B cell (primary cell): ENCODE measurements at regions of chr1 and their contacts with region 1.

Region 1: GRCh38 chr1:44036409-44037139 is 5.3 kb upstream of the SLC6A9 start:
- DNase-seq: peak; percentile 77
- ATAC-seq: peak; percentile 83
- H3K4me3 ChIP-seq: no peak overlapping the region
- H3K4me3 Mint-ChIP-seq: no peak overlapping the region
- H3K27ac ChIP-seq: no peak overlapping the region
- H3K27ac Mint-ChIP-seq: no peak overlapping the region
- H3K4me1 ChIP-seq: peaks cover 0 to under 1% of the 10 kb centered on the region in 2 donors
- H3K4me1 Mint-ChIP-seq: peaks cover under 1% of the 10 kb centered on the region
- H3K27me3 ChIP-seq: no peaks in the 10 kb centered on the region
- H3K27me3 Mint-ChIP-seq: no peaks in the 10 kb centered on the region
- CTCF ChIP-seq: peak; percentile 88

Region 2: DNA sequence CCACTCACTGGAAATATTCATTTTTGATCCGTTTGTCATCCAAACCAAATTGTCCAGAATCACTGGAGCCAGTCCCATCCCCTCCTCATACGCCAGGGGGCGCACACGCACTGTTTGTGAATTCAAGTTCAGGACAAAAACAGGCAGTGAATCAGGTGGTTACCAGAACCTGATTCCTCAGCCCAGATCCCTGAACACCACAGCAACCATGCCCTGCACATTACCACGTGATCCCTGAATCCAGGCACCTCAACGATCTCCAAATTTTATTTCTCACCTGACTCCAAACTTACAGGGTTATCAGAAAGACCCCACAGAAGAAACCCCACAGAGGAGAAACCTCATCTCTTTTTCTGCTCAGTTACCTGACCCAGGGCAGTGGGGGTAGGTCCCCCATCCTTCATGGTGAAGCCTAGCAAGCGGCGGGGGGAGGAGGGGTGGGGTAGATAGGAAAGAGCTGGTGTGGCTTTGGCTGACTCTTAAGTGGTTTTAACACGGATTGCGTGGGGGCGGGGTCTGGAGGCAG is 507.3 kb before region 1 on chr1:
- CTCF ChIA-PET with region 1: interaction called, 12 read pairs
- POLR2A ChIA-PET with region 1: no interaction called
- intact Hi-C with region 1: loop called (anchors 1 kb)
- DNase-seq: peak; percentile 83
- ATAC-seq: peak; percentile 71
- H3K4me3 ChIP-seq: no peak overlapping the region
- H3K4me3 Mint-ChIP-seq: peak overlapping the region; percentile 72
- H3K27ac ChIP-seq: no peak overlapping the region
- H3K27ac Mint-ChIP-seq: no peak overlapping the region
- H3K4me1 ChIP-seq: peaks cover 13 to 18% of the 10 kb centered on the region in 2 donors
- H3K4me1 Mint-ChIP-seq: peaks cover 16% of the 10 kb centered on the region
- H3K27me3 ChIP-seq: peaks cover 0 to 33% (median 22%) of the 10 kb centered on the region in 4 experiments
- H3K27me3 Mint-ChIP-seq: peaks cover 59% of the 10 kb centered on the region
- CTCF ChIP-seq: peak; percentile 94

Region 3: DNA sequence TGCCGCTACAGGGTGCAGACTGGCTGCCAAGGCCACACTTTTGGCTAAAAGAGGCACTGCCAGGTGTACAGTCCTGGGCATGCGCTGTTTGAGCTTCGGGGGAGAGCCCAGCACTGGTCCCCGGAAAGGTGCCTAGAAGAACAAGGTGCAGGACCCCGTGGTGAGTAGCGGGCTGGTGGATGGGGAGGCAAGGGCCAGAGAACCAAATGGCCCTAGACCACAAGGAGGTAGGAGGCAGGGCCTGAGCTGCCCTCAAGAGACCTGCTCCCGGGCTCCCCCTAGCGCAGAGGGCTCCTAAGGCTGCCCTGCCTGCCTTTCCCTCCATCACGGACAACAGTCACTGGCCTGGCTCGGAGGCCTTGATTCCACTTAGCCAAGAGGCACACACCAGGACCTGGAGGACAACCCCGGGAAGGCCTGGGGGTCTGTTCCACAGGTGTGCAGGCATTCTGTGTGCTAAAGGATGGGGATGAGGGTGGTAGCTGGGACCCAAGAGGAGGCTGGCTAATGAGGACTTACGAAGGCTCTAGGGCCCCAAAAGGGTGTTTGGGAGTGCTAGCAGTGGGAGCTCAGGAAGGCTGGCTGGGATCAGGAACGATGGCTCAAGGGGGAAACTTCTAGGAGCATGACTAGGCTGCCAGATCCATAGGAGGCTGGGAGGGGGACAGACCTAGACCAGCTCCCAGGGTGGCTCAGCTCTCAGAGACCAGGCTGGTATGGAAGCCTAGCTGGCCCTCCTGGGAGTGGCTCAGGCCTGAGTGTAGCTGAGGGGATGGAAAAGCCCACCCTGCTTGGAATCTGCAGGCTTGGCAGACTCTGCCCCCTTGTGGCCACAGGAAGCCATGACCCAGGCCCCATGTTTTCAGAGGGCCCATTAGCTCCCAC is 102.2 kb before region 1 on chr1:
- CTCF ChIA-PET with region 1: interaction called, 14 read pairs
- POLR2A ChIA-PET with region 1: no interaction called
- intact Hi-C with region 1: no loop called
- DNase-seq: peak; percentile 66
- ATAC-seq: peak; percentile 59
- H3K4me3 ChIP-seq: no peak overlapping the region
- H3K4me3 Mint-ChIP-seq: peak overlapping the region; percentile 41
- H3K27ac ChIP-seq: no peak overlapping the region
- H3K27ac Mint-ChIP-seq: no peak overlapping the region
- H3K4me1 ChIP-seq: peaks cover 29 to 30% of the 10 kb centered on the region in 2 donors
- H3K4me1 Mint-ChIP-seq: peaks cover 21% of the 10 kb centered on the region
- H3K27me3 ChIP-seq: peaks cover 0 to 44% (median 26%) of the 10 kb centered on the region in 4 experiments
- H3K27me3 Mint-ChIP-seq: peaks cover 26% of the 10 kb centered on the region
- CTCF ChIP-seq: peak; percentile 69

Region 4: DNA sequence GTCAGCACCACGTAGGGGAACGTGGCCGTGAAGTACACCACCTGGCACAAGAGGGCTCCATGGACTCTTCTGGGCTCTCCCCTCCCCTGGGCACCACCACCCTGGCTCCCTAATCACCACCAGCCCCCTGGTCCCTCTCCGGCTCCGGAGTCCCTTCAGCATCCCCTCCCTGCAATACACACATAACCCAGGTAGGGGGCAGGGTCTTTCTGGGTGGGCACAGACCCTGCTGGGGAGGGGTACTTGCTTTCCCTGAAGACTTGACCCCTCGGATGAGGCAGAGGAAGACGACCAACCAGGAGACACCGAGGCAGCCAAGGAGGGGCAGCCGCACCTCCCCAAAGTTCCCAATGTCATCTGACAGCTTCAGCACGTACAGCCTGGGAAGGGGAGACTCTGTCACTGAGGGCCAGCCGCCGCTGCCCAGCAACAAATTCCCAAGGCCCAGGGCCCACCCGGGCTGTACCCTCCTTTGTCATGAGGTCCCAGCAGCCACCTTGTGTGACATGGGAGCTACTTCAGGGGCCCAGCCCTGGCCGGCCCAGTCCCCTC is 33.9 kb before region 1 on chr1:
- CTCF ChIA-PET with region 1: interaction called, 227 read pairs
- POLR2A ChIA-PET with region 1: no interaction called
- intact Hi-C with region 1: no loop called
- DNase-seq: no peak
- ATAC-seq: no peak
- H3K4me3 ChIP-seq: no peak overlapping the region
- H3K4me3 Mint-ChIP-seq: no peak overlapping the region
- H3K27ac ChIP-seq: no peak overlapping the region
- H3K27ac Mint-ChIP-seq: no peak overlapping the region
- H3K4me1 ChIP-seq: no peaks in the 10 kb centered on the region
- H3K4me1 Mint-ChIP-seq: no peaks in the 10 kb centered on the region
- H3K27me3 ChIP-seq: no peaks in the 10 kb centered on the region
- H3K27me3 Mint-ChIP-seq: no peaks in the 10 kb centered on the region
- CTCF ChIP-seq: peak; percentile 18

Region 5: DNA sequence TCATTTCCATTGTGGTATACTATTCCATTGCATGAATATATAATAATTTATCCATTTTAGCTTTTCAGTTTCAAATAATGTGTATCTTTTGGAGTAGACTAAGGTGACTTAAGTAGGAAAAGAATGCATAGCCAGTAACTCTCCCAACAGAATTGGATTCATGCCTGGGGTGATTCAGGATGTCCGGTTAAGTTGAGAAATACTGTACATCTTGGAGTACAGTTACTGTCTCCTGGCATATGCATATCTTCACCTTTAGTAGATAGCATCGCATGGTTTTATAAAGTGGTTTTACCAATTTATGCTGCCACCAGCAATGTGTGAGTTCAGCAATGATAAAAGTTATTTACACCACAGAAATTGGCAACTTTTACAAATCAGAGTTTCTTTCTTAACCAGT is 13.3 kb after region 1 on chr1:
- CTCF ChIA-PET with region 1: interaction called, 59 read pairs
- POLR2A ChIA-PET with region 1: no interaction called
- intact Hi-C with region 1: no loop called
- DNase-seq: no peak
- ATAC-seq: no peak
- H3K4me3 ChIP-seq: no peak overlapping the region
- H3K4me3 Mint-ChIP-seq: no peak overlapping the region
- H3K27ac ChIP-seq: no peak overlapping the region
- H3K27ac Mint-ChIP-seq: no peak overlapping the region
- H3K4me1 ChIP-seq: peaks cover 0 to 3% of the 10 kb centered on the region in 2 donors
- H3K4me1 Mint-ChIP-seq: peaks cover 6% of the 10 kb centered on the region
- H3K27me3 ChIP-seq: peaks cover 0 to 7% (median 0%) of the 10 kb centered on the region in 4 experiments
- H3K27me3 Mint-ChIP-seq: peaks cover 18% of the 10 kb centered on the region
- CTCF ChIP-seq: no peak

Region 6: GRCh38 chr1:44072204-44072603 is 35.6 kb after region 1 on chr1:
- CTCF ChIA-PET with region 1: no interaction called
- POLR2A ChIA-PET with region 1: no interaction called
- intact Hi-C with region 1: no loop called
- DNase-seq: no peak
- ATAC-seq: no peak
- H3K4me3 ChIP-seq: no peak overlapping the region
- H3K4me3 Mint-ChIP-seq: no peak overlapping the region
- H3K27ac ChIP-seq: no peak overlapping the region
- H3K27ac Mint-ChIP-seq: no peak overlapping the region
- H3K4me1 ChIP-seq: peaks cover 44 to 46% of the 10 kb centered on the region in 2 donors
- H3K4me1 Mint-ChIP-seq: peaks cover 48% of the 10 kb centered on the region
- H3K27me3 ChIP-seq: no peaks in the 10 kb centered on the region
- H3K27me3 Mint-ChIP-seq: no peaks in the 10 kb centered on the region
- CTCF ChIP-seq: no peak